Panc1 (cell line): ENCODE measurements at regions of chr3 and their contacts with region 1.

Region 1: DNA sequence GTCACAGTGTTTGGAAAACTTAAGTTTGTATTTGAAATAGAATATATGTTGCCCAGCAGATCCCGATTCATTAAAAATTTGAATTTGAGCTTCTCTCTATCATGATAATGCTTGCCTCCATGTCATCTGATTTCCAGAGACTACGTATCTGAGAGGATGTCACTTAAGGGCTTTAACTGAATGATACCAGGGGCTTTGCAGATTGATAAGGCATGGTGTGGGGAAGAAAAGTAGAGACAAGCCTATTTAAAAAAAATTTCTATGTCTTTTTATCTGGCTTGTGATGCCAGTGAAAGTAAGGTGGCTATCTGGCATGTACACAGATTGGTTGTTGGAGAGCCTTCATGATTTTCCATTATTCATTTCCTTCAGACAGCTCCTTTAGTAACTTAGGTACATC is 72.7 kb downstream of the UBE2E2 start:
- DNase-seq: no peak
- ATAC-seq: no peak
- H3K4me3 ChIP-seq: no peak overlapping the region
- H3K27ac ChIP-seq: no peak overlapping the region
- H3K4me1 ChIP-seq: no peaks in the 10 kb centered on the region; the same call in 1 of the 2 replicates
- H3K27me3 ChIP-seq: no peaks in the 10 kb centered on the region
- CTCF ChIP-seq: no peak

Region 2: GRCh38 chr3:23029001-23029400 is 246.8 kb before region 1 on chr3:
- CTCF ChIA-PET with region 1: no interaction called
- POLR2A ChIA-PET with region 1: no interaction called
- in situ Hi-C with region 1: no loop called
- intact Hi-C with region 1: no loop called
- DNase-seq: no peak
- ATAC-seq: no peak
- H3K4me3 ChIP-seq: no peak overlapping the region
- H3K27ac ChIP-seq: no peak overlapping the region
- H3K4me1 ChIP-seq: no peaks in the 10 kb centered on the region
- H3K27me3 ChIP-seq: no peaks in the 10 kb centered on the region
- CTCF ChIP-seq: no peak

Region 3: GRCh38 chr3:23341147-23341838 is 65.5 kb after region 1 on chr3:
- CTCF ChIA-PET with region 1: no interaction called
- POLR2A ChIA-PET with region 1: no interaction called
- in situ Hi-C with region 1: no loop called
- intact Hi-C with region 1: loop called (anchors 2 kb)
- DNase-seq: no peak
- ATAC-seq: no peak
- H3K4me3 ChIP-seq: no peak overlapping the region
- H3K27ac ChIP-seq: no peak overlapping the region
- H3K4me1 ChIP-seq: no peaks in the 10 kb centered on the region
- H3K27me3 ChIP-seq: no peaks in the 10 kb centered on the region
- CTCF ChIP-seq: no peak